Prostate gland (tissue), 2 donors: ENCODE measurements at regions of chr6 and their contacts with region 1.

Region 1: GRCh38 chr6:4055420-4056041 is 23.4 kb downstream of the FAM217A start:
- DNase-seq: peak; percentile 12
- H3K4me3 ChIP-seq: no peak overlapping the region
- H3K27ac ChIP-seq: no peak overlapping the region
- H3K4me1 ChIP-seq: no peaks in the 10 kb centered on the region
- H3K27me3 ChIP-seq: no peaks in the 10 kb centered on the region
- CTCF ChIP-seq: peak in 2 of 4 experiments; percentile 30 to 34
- POLR2A ChIP-seq: no peak

Region 2: GRCh38 chr6:4153514-4153985 is 98.0 kb after region 1 on chr6:
- intact Hi-C with region 1: loop called (anchors 5 kb)
- DNase-seq: no peak
- H3K4me3 ChIP-seq: no peak overlapping the region
- H3K27ac ChIP-seq: no peak overlapping the region
- H3K4me1 ChIP-seq: no peaks in the 10 kb centered on the region
- H3K27me3 ChIP-seq: no peaks in the 10 kb centered on the region
- CTCF ChIP-seq: no peak
- POLR2A ChIP-seq: no peak

Region 3: DNA sequence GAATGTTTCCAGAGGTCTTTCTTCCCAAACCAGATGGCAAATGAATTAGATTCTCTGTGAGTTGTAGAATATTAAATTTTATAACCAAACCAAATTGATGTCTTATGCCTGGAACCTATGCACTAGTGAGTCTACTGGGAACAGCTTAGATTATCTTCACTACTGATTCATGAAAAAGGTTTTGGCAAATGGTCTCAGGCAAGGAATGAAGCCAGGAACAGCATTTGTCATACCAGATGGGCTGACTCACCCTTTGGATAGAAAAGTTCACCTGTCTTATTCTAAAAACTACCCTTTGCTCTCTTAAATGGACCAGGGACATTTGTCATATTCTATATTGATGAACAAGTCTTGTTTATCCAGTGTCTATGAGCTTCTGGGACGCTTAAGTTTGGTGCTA is 215.2 kb after region 1 on chr6:
- intact Hi-C with region 1: no loop called
- DNase-seq: no peak
- H3K4me3 ChIP-seq: no peak overlapping the region
- H3K27ac ChIP-seq: no peak overlapping the region
- H3K4me1 ChIP-seq: no peaks in the 10 kb centered on the region
- H3K27me3 ChIP-seq: no peaks in the 10 kb centered on the region
- CTCF ChIP-seq: no peak
- POLR2A ChIP-seq: no peak

Region 4: GRCh38 chr6:5389086-5389745 is 1333.7 kb after region 1 on chr6:
- intact Hi-C with region 1: no loop called
- DNase-seq: no peak
- H3K4me3 ChIP-seq: no peak overlapping the region
- H3K27ac ChIP-seq: no peak overlapping the region
- H3K4me1 ChIP-seq: no peaks in the 10 kb centered on the region
- H3K27me3 ChIP-seq: no peaks in the 10 kb centered on the region
- CTCF ChIP-seq: no peak
- POLR2A ChIP-seq: no peak